ENCODE measurements at regions of chr13 and their contacts with region 1.

Region 1: GRCh38 chr13:28636674-28637317 is 22.1 kb upstream of the POMP start:
- DNase-seq: peak; percentile 75
- H3K4me3 Mint-ChIP-seq: no peak overlapping the region
- H3K27ac Mint-ChIP-seq: no peak overlapping the region
- H3K4me1 Mint-ChIP-seq: peaks cover 5% of the 10 kb centered on the region
- H3K27me3 Mint-ChIP-seq: peaks cover 9% of the 10 kb centered on the region
- CTCF ChIP-seq: peak; percentile 92

Region 2: GRCh38 chr13:26932435-26932834 is 1704.4 kb before region 1 on chr13:
- CTCF ChIA-PET with region 1: no interaction called
- POLR2A ChIA-PET with region 1: no interaction called
- intact Hi-C with region 1: no loop called
- DNase-seq: no peak
- H3K4me3 Mint-ChIP-seq: no peak overlapping the region
- H3K27ac Mint-ChIP-seq: no peak overlapping the region
- H3K4me1 Mint-ChIP-seq: no peaks in the 10 kb centered on the region
- H3K27me3 Mint-ChIP-seq: peaks cover 19% of the 10 kb centered on the region
- CTCF ChIP-seq: no peak

Region 3: DNA sequence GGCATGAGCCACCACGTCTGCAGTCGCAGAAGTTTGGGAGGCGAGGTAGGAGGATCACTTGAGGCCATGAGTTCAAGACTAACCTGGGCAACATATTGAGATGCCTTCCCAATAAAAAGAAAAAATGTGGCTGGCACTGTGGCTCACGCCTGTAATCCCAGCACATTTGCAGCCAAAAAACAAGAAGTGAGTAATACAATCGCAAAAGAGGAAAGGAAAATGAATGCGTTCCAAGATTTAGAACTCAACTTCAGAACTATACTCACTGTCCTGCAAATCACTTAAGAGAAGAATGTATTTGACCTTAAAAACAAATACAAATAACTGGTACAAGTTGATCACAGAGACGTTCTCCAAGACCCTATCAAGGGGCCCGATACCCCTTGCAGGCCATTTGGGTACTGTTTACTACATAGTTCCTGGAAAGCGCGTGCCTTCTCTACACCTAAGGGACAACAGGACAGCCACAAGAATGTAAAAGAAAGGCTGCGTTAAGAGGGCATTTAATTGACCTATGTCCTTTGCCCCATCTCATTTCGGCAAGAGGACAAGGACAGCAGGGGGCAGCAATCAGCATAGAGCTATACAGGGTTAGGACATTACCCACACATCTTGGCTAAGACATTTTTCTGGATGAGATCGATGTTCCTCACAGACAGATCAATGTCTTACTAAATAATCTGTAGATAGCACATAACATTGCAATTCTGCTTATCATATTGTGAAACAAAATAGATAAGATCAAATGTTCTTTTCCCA is 577.8 kb before region 1 on chr13:
- CTCF ChIA-PET with region 1: no interaction called
- POLR2A ChIA-PET with region 1: no interaction called
- intact Hi-C with region 1: loop called (anchors 1 kb)
- DNase-seq: peak; percentile 59
- H3K4me3 Mint-ChIP-seq: no peak overlapping the region
- H3K27ac Mint-ChIP-seq: no peak overlapping the region
- H3K4me1 Mint-ChIP-seq: no peaks in the 10 kb centered on the region
- H3K27me3 Mint-ChIP-seq: peaks cover 19% of the 10 kb centered on the region
- CTCF ChIP-seq: peak; percentile 39

Region 4: GRCh38 chr13:28329395-28330158 is 307.2 kb before region 1 on chr13:
- CTCF ChIA-PET with region 1: interaction called, 85 read pairs
- POLR2A ChIA-PET with region 1: no interaction called
- intact Hi-C with region 1: loop called (anchors 1 kb)
- DNase-seq: peak; percentile 4
- H3K4me3 Mint-ChIP-seq: no peak overlapping the region
- H3K27ac Mint-ChIP-seq: no peak overlapping the region
- H3K4me1 Mint-ChIP-seq: no peaks in the 10 kb centered on the region
- H3K27me3 Mint-ChIP-seq: no peaks in the 10 kb centered on the region
- CTCF ChIP-seq: no peak

Region 5: GRCh38 chr13:28483313-28483930 is 153.4 kb before region 1 on chr13:
- CTCF ChIA-PET with region 1: interaction called, 4 read pairs
- POLR2A ChIA-PET with region 1: interaction called, 3 read pairs
- intact Hi-C with region 1: loop called (anchors 5 kb)
- DNase-seq: no peak
- H3K4me3 Mint-ChIP-seq: no peak overlapping the region
- H3K27ac Mint-ChIP-seq: no peak overlapping the region
- H3K4me1 Mint-ChIP-seq: no peaks in the 10 kb centered on the region
- H3K27me3 Mint-ChIP-seq: peaks cover 44% of the 10 kb centered on the region
- CTCF ChIP-seq: no peak

Region 6: GRCh38 chr13:28658796-28659620 is 22.2 kb after region 1 on chr13 and contains the start of gene POMP:
- CTCF ChIA-PET with region 1: interaction called, 16 read pairs
- POLR2A ChIA-PET with region 1: interaction called, 4 read pairs
- intact Hi-C with region 1: no loop called
- DNase-seq: peak; percentile 94
- H3K4me3 Mint-ChIP-seq: peak within 1 kb of the TSS; percentile 90
- H3K27ac Mint-ChIP-seq: peak within 1 kb of the TSS; percentile 97
- H3K4me1 Mint-ChIP-seq: peaks cover 48% of the 10 kb centered on the region
- H3K27me3 Mint-ChIP-seq: no peaks in the 10 kb centered on the region
- CTCF ChIP-seq: no peak
- total RNA-seq, gene POMP: 103 and 136 TPM in 2 replicates

Measured in MCF 10A (cell line).